Endothelial cell of umbilical vein (primary cell): ENCODE measurements at regions of chr2 and their contacts with region 1.

Region 1: DNA sequence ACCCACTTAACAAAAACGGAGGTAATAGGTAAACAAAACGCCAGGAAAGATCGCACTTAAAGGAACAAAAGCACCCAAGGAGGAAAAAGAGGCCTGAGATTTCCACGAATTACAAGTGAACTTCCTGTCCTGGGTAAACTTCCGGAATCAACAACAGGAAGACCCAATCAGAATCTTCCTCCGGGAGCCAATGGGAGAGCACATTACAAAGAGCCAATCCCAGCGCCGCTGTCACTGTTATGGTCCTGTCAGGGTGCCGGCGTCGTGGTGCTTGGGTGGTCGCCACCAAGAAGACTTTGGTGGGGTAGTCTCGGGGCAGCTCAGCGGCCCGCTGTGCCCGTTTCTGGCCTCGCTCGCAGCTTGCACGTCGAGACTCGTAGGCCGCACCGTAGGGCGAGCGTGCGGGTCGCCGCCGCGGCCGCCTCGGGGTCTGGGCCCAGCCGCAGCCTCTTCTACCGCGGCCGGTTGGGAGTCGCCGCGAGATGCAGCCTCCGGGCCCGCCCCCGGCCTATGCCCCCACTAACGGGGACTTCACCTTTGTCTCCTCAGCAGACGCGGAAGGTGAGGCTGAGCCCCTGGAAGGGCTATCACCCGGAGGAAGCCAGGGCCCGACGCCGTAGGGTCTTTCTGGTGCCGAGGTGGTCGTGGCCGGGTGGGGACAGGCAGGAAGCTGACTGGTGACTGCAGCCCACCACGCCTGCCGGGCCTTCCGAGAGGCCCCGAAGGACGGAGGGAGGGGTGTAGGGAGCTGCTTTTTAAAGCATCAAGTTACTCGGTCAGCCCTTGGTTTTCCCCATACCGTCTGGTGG is at the start of gene YIPF4:
- DNase-seq: peak; percentile 97
- H3K4me3 ChIP-seq: peak within 1 kb of the TSS; percentile 86 to 94 (median 88)
- H3K27ac ChIP-seq: peak within 1 kb of the TSS; percentile 80
- H3K4me1 ChIP-seq: peaks cover 11% of the 10 kb centered on the region
- H3K27me3 ChIP-seq: peaks cover 0 to 2% of the 10 kb centered on the region in 2 experiments
- CTCF ChIP-seq: no peak
- POLR2A ChIP-seq: peak; percentile 69
- total RNA-seq, gene YIPF4: 40.1 and 45.0 TPM in 2 replicates

Region 2: GRCh38 chr2:32168513-32168912 is 109.4 kb before region 1 on chr2:
- CTCF ChIA-PET with region 1: interaction called, 3 read pairs
- POLR2A ChIA-PET with region 1: no interaction called
- dilution Hi-C with region 1: no loop called
- intact Hi-C with region 1: loop called (anchors 2 kb)
- DNase-seq: no peak
- H3K4me3 ChIP-seq: no peak overlapping the region
- H3K27ac ChIP-seq: no peak overlapping the region
- H3K4me1 ChIP-seq: peaks cover 11% of the 10 kb centered on the region
- H3K27me3 ChIP-seq: no peaks in the 10 kb centered on the region
- CTCF ChIP-seq: no peak
- POLR2A ChIP-seq: no peak

Region 3: GRCh38 chr2:32192418-32192817 is 85.5 kb before region 1 on chr2:
- CTCF ChIA-PET with region 1: no interaction called
- POLR2A ChIA-PET with region 1: no interaction called
- dilution Hi-C with region 1: no loop called
- intact Hi-C with region 1: no loop called
- DNase-seq: no peak
- H3K4me3 ChIP-seq: no peak overlapping the region
- H3K27ac ChIP-seq: no peak overlapping the region
- H3K4me1 ChIP-seq: no peaks in the 10 kb centered on the region
- H3K27me3 ChIP-seq: no peaks in the 10 kb centered on the region
- CTCF ChIP-seq: no peak
- POLR2A ChIP-seq: no peak